ENCODE measurements at regions of chrX and their contacts with region 1.

Region 1: DNA sequence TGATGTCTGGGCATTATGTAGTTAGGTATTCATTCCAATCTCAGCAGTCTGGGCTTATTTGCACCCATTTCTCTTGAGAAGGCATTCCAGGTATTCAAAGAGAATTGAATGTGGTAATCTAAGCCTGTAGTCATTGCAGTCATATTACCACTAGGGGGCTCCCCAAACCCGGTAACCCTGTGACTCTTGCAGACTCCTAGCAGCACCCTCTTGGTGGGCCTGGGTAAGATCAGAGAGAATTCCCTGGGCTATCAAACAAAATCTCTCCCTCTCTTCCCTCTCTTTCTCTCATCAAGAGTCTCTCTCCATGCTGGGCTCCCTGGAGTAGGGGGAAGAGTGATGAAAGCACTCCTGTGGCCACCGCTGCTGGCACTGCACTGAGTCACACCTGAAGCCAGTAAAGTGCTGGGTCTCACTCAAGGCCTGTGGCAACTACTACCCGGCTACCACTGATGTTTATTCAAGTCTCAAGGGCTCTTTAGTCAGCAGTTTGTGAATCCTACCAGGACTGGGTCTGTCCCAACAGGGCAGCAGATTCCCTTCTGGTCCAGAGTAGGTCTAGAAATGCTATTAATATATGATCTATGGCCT is 187.7 kb upstream of the NUDT10 start:
- DNase-seq: no peak

Region 2: GRCh38 chrX:51459125-51459524 is 314.2 kb after region 1 on chrX:
- intact Hi-C with region 1: loop called (anchors 10 kb)
- DNase-seq: no peak

Measured in cardiac septum (tissue), 1 donor.